ENCODE measurements at regions of chr1 and their contacts with region 1.

Region 1: DNA sequence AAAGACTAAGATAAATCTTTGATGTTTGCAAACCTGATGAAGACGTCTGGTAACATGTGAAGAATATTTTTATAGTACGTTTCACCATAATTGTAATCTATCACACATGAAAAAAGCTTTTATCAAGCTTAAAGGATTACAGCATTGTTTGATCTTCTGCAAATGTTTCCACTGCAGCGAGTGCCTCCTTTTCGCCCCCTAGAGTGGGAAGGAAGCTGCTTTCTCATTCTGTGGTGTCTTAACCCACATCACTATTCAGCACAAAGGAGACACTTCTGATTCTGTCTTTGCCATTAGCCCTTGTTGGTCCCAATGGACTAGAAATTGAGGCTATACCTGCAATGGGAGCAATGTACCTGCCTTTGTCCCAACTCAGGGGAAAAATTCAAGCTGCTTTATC is 46.0 kb upstream of the IL12RB2 start:
- DNase-seq: peak in 1 of 2 experiments; percentile 46
- H3K4me3 ChIP-seq: peak overlapping the region in 1 of 4 experiments; percentile 35; a peak in 1 of 8 replicates
- H3K27ac ChIP-seq: no peak overlapping the region
- H3K4me1 ChIP-seq: peaks cover 0 to 14% (median 8%) of the 10 kb centered on the region in 4 experiments; a peak in 3 of 7 replicates
- H3K27me3 ChIP-seq: no peaks in the 10 kb centered on the region
- CTCF ChIP-seq: peak; percentile 18 to 63 (median 33); a peak in 3 of 4 replicates
- EP300 ChIP-seq: no peak
- POLR2A ChIP-seq: no peak
- RAD21 ChIP-seq: peak in 1 of 2 experiments; percentile 3; a peak in 1 of 4 replicates

Region 2: GRCh38 chr1:67239738-67240137 is 21.9 kb before region 1 on chr1:
- CTCF ChIA-PET with region 1: interaction called, 12 read pairs
- POLR2A ChIA-PET with region 1: no interaction called
- DNase-seq: no peak
- H3K4me3 ChIP-seq: no peak overlapping the region
- H3K27ac ChIP-seq: no peak overlapping the region
- H3K4me1 ChIP-seq: no peaks in the 10 kb centered on the region
- H3K27me3 ChIP-seq: no peaks in the 10 kb centered on the region
- CTCF ChIP-seq: no peak
- EP300 ChIP-seq: no peak
- POLR2A ChIP-seq: no peak
- RAD21 ChIP-seq: no peak

Region 3: GRCh38 chr1:67274623-67275325 is 13.1 kb after region 1 on chr1:
- CTCF ChIA-PET with region 1: interaction called, 15 read pairs
- POLR2A ChIA-PET with region 1: no interaction called
- DNase-seq: no peak
- H3K4me3 ChIP-seq: no peak overlapping the region
- H3K27ac ChIP-seq: no peak overlapping the region
- H3K4me1 ChIP-seq: no peaks in the 10 kb centered on the region
- H3K27me3 ChIP-seq: no peaks in the 10 kb centered on the region
- CTCF ChIP-seq: no peak
- EP300 ChIP-seq: no peak
- POLR2A ChIP-seq: no peak
- RAD21 ChIP-seq: no peak

Region 4: GRCh38 chr1:67376381-67376780 is 114.7 kb after region 1 on chr1:
- CTCF ChIA-PET with region 1: no interaction called
- POLR2A ChIA-PET with region 1: no interaction called
- DNase-seq: no peak
- H3K4me3 ChIP-seq: no peak overlapping the region
- H3K27ac ChIP-seq: no peak overlapping the region
- H3K4me1 ChIP-seq: peaks cover 0 to 7% (median 5%) of the 10 kb centered on the region in 4 experiments; a peak in 4 of 7 replicates
- H3K27me3 ChIP-seq: no peaks in the 10 kb centered on the region
- CTCF ChIP-seq: no peak
- EP300 ChIP-seq: no peak
- POLR2A ChIP-seq: no peak
- RAD21 ChIP-seq: no peak

Measured in H1 (cell line).